Left cardiac atrium (tissue), 4 donors: ENCODE measurements at regions of chr20 and their contacts with region 1.

Region 1: GRCh38 chr20:16027710-16028109 is 545.5 kb downstream of the KIF16B start:
- DNase-seq: no peak
- ATAC-seq: no peak

Region 2: GRCh38 chr20:16005021-16005914 is 22.4 kb before region 1 on chr20:
- intact Hi-C with region 1: loop called in 1 of 2 experiments (anchors 1 kb)
- DNase-seq: no peak
- ATAC-seq: no peak